MCF 10A (cell line): ENCODE measurements at regions of chr6 and their contacts with region 1.

Region 1: GRCh38 chr6:75526502-75527127 is 33.0 kb upstream of the FILIP1 start:
- DNase-seq: peak; percentile 72
- H3K4me3 Mint-ChIP-seq: no peak overlapping the region
- H3K27ac Mint-ChIP-seq: no peak overlapping the region
- H3K4me1 Mint-ChIP-seq: peaks cover 12% of the 10 kb centered on the region
- H3K27me3 Mint-ChIP-seq: no peaks in the 10 kb centered on the region
- CTCF ChIP-seq: peak; percentile 76

Region 2: GRCh38 chr6:74343804-74344203 is 1182.8 kb before region 1 on chr6:
- CTCF ChIA-PET with region 1: no interaction called
- POLR2A ChIA-PET with region 1: no interaction called
- intact Hi-C with region 1: no loop called
- DNase-seq: peak; percentile 28
- H3K4me3 Mint-ChIP-seq: no peak overlapping the region
- H3K27ac Mint-ChIP-seq: no peak overlapping the region
- H3K4me1 Mint-ChIP-seq: no peaks in the 10 kb centered on the region
- H3K27me3 Mint-ChIP-seq: no peaks in the 10 kb centered on the region
- CTCF ChIP-seq: no peak

Region 3: GRCh38 chr6:75266716-75267291 is 259.8 kb before region 1 on chr6:
- CTCF ChIA-PET with region 1: interaction called, 39 read pairs
- POLR2A ChIA-PET with region 1: interaction called, 9 read pairs
- intact Hi-C with region 1: loop called (anchors 1 kb)
- DNase-seq: peak; percentile 65
- H3K4me3 Mint-ChIP-seq: no peak overlapping the region
- H3K27ac Mint-ChIP-seq: no peak overlapping the region
- H3K4me1 Mint-ChIP-seq: peaks cover 12% of the 10 kb centered on the region
- H3K27me3 Mint-ChIP-seq: no peaks in the 10 kb centered on the region
- CTCF ChIP-seq: peak; percentile 55

Region 4: DNA sequence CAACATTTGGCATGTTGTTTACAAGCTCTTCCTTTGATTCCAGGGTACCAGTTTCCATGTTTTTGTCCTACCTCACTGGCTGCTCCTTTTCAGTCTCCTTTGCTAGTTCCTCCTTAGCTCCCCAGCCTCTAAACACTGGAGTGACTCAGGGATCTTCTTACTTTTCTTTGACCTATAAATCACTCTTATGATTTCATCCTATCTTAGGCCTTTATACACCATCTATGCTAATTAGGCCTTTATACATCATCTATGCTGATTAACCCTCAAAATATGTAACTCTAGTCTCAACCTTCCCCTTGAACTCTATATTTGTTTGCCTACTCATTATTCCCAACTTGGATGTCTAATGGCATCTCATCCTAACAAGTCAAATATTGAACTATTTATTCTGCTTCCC is 251.5 kb before region 1 on chr6:
- CTCF ChIA-PET with region 1: interaction called, 12 read pairs
- POLR2A ChIA-PET with region 1: interaction called, 4 read pairs
- intact Hi-C with region 1: no loop called
- DNase-seq: peak; percentile 39
- H3K4me3 Mint-ChIP-seq: no peak overlapping the region
- H3K27ac Mint-ChIP-seq: peak overlapping the region; percentile 53
- H3K4me1 Mint-ChIP-seq: peaks cover 65% of the 10 kb centered on the region
- H3K27me3 Mint-ChIP-seq: no peaks in the 10 kb centered on the region
- CTCF ChIP-seq: no peak

Region 5: GRCh38 chr6:75284632-75285286 is 241.9 kb before region 1 on chr6 and contains the start of gene TMEM30A:
- CTCF ChIA-PET with region 1: interaction called, 3 read pairs
- POLR2A ChIA-PET with region 1: interaction called, 22 read pairs
- intact Hi-C with region 1: no loop called
- DNase-seq: peak; percentile 99
- H3K4me3 Mint-ChIP-seq: no peak within 1 kb of the TSS
- H3K27ac Mint-ChIP-seq: no peak within 1 kb of the TSS
- H3K4me1 Mint-ChIP-seq: peaks cover 21% of the 10 kb centered on the region
- H3K27me3 Mint-ChIP-seq: no peaks in the 10 kb centered on the region
- CTCF ChIP-seq: no peak
- total RNA-seq, gene TMEM30A: 53.7 and 71.4 TPM in 2 replicates

Region 6: DNA sequence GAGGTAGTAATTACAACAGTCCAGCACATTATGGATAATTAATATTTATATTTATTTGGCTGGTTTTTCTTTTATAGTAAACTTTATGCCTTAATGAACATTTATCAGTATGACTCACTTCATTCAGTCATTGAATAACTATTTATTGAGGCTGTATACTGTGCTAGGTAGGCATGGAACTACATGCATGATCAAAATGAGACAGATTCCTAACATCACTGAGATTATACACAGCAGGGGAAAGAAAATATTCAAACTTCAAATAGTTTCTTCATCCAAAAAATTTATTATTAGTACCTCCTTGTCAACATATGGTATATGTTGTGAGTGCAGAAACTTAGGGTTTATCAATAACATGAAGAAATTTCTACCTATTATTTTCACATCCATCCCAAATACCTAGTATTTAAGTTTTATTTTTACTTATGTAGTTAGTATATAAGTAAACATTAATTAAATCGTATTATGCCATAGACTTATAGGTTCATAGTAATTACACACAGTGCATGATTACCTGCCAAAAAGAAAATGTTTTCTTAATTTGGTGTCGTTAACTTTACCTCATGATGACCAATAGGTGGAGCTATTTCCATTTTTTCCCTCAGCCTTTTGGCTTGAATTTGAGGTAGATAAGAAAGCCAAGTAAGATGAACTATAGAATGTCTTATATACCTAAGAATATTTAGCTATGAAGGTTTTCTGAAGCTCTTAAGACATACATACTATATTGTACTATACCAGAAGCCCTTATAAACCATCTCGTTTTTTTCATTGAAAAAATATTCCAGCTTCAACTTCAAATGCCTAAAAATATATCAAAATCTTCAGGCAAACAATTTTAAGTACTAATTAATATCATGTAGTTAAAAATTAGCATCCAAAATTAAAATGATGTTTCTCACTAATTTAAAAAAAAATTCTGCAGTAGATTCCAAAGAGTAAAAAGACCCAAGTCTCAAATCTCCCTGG is 229.5 kb before region 1 on chr6:
- CTCF ChIA-PET with region 1: interaction called, 28 read pairs
- POLR2A ChIA-PET with region 1: interaction called, 8 read pairs
- intact Hi-C with region 1: loop called (anchors 1 kb)
- DNase-seq: peak; percentile 72
- H3K4me3 Mint-ChIP-seq: no peak overlapping the region
- H3K27ac Mint-ChIP-seq: no peak overlapping the region
- H3K4me1 Mint-ChIP-seq: no peaks in the 10 kb centered on the region
- H3K27me3 Mint-ChIP-seq: no peaks in the 10 kb centered on the region
- CTCF ChIP-seq: peak; percentile 56

Region 7: DNA sequence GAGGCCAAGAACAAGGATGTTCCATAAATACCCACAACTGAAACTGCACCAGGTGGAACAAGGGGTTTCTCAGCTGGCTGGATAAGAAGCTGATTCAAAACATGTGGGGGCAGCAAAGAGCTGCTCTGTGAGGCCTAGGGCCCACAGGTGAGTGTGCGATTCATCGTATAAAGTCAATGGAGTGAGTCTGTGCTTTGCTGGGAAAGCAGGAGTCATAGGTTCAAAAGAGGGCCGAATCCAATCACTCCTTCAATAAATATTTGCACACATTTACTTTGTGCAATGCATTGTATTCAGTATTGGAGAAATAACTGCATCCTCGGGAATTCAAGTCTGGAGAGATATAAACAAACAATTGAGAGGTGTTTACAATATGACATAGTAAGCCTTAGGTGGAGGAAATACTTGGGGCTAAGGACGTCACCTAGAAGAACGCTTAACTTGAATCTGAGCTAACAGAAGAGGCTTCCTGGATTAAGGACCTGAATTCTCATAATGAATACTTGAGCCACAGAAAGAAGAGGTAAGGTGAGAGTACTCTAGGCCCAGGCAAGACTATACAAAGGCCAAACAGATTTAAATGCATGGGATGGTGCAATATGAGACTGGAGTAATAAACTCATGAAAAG is 158.3 kb before region 1 on chr6:
- CTCF ChIA-PET with region 1: interaction called, 32 read pairs
- POLR2A ChIA-PET with region 1: interaction called, 5 read pairs
- intact Hi-C with region 1: loop called (anchors 1 kb)
- DNase-seq: peak; percentile 62
- H3K4me3 Mint-ChIP-seq: no peak overlapping the region
- H3K27ac Mint-ChIP-seq: no peak overlapping the region
- H3K4me1 Mint-ChIP-seq: no peaks in the 10 kb centered on the region
- H3K27me3 Mint-ChIP-seq: no peaks in the 10 kb centered on the region
- CTCF ChIP-seq: peak; percentile 31